WTC11 (cell line): ENCODE measurements at regions of chr6 and their contacts with region 1.

Region 1: DNA sequence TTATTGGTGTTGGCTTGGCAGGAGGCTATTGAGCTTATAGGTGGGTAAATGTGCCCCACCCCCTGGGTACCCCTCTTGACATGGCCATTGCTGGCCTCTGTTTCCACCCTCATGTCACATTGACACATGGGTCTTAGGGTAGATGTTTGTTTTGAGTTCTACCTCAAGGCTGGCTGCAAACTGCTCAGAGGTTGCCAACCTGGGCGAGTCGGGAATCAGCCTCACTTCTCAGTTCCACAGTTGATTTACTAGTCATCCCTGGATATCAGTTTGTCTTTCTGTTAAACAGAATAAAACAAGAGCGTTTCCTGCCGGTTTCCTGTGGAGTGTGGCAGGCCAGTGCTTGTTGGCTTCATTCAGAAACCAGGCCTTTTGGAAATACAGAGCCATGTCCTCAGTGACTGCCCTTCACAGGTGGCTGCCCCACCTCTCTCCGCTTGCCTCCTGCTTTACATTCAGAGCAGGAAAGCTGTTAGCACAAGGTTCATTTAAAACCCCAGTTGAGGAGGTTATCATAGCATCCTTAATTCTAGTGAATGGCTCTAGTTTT is 105.6 kb downstream of the TCP11 start:
- DNase-seq: no peak
- ATAC-seq: no peak
- H3K4me3 Mint-ChIP-seq: no peak overlapping the region
- H3K27ac Mint-ChIP-seq: peak overlapping the region; percentile 97
- H3K4me1 Mint-ChIP-seq: peaks cover 63% of the 10 kb centered on the region
- H3K27me3 Mint-ChIP-seq: no peaks in the 10 kb centered on the region
- CTCF ChIP-seq: no peak

Region 2: DNA sequence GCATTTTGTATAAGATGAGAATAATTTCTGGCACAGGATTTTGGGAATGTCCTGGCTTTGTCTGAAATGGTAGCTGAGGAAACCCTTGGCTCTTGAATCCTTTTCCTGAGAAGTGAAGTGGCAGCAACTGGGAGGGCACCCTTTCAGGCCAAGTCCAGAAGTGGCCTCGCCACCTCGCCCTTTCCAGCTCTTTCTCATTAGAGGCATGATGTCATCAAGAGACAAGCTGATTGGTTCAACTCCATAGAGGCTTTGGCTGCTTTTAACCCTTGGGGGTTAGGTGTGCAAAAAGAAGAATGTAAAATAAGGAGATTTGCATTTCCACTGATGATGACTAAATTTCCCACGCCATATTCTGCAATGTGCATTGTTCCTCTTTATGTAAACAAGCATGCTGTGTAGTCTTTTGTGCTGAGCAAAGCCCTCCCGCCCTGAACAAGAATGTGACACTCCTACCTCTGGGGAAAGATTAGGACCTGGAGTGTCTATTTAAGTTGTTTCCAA is 11.0 kb before region 1 on chr6:
- CTCF ChIA-PET with region 1: interaction called, 10 read pairs
- POLR2A ChIA-PET with region 1: interaction called, 4 read pairs
- DNase-seq: no peak
- ATAC-seq: peak; percentile 59
- H3K4me3 Mint-ChIP-seq: peak overlapping the region; percentile 35
- H3K27ac Mint-ChIP-seq: peak overlapping the region; percentile 29
- H3K4me1 Mint-ChIP-seq: peaks cover 78% of the 10 kb centered on the region
- H3K27me3 Mint-ChIP-seq: no peaks in the 10 kb centered on the region
- CTCF ChIP-seq: no peak